Dorsolateral prefrontal cortex (tissue), 120 donors: ENCODE measurements at regions of chr2 and their contacts with region 1.

Region 1: DNA sequence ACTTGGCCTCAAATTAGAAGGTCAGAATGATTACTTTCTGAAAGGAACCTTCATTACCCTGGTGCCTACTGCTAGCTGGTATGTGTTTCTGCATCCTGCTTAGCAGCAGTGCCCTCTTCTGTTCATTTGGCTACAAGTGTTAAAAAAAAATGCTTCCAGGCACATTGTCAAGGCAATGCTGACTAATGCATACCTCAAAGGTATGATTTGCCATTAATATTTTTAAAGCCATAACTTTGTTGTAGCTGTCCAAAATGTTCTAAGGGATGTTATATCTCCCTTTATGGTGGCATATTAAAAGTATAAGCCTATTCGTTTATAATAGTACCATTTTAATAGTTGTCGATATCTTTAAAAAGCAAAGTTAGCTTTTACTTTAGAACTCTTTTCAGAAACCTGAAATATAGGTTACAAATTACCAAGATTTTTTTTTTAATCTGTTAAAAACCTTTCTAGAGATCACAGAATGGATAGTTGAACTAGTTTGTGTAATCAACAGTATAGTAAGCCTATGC is 52.0 kb upstream of the FAM171B start:
- DNase-seq: peak in 2 of 10 donors; percentile 17 to 38
- H3K4me3 ChIP-seq: no peak overlapping the region
- H3K27ac ChIP-seq: no peak overlapping the region
- H3K27me3 ChIP-seq: no peaks in the 10 kb centered on the region
- CTCF ChIP-seq: peak; percentile 45 to 91 (median 75)

Region 2: DNA sequence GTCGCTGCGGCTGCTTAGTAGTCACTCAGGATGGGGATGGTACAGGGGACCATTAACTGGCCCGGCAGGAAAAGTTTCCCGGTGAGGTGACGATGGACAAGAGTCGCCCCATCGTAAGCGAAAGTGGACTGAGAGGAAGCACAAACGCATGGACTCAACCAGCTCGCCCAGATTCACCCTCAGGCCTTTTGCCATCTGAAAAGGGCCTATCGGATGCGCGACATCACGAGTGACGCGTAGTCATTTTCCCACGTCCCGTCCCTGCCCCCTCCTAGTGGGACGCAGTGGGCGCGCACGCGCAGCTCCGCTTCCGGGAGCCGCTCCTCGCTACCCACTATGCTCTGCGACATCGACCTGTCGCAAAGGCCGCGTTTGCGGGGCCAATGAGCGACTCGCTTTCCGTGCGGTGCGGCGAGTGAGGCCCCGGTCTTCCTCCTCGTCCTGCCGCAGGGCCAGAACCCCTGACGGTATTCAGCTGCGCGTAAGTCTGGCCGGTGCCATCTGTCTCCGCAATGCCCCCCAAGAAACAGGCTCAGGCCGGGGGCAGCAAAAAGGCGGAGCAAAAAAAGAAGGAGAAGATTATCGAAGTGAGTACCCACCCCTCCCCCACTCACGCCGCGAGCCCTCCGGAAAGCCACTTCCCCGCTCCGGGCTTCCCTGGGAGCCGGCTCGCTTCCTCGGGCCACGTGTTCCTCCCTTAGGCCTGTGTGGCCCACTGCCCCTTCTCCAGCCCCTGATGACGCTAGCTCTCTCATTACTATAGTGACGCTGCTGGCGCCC is 155.8 kb before region 1 on chr2 and contains the start of gene ZC3H15:
- intact Hi-C with region 1: loop called in 1 of 2 experiments (anchors 5 kb)
- DNase-seq: peak; percentile 92 to 98 (median 94)
- H3K4me3 ChIP-seq: peak within 1 kb of the TSS; percentile 60 to 100 (median 93)
- H3K27ac ChIP-seq: peak within 1 kb of the TSS; percentile 41 to 96 (median 91)
- H3K27me3 ChIP-seq: no peaks in the 10 kb centered on the region
- CTCF ChIP-seq: peak in 29 of 56 donors; percentile 7 to 53 (median 30)
- total RNA-seq, gene ZC3H15: 41.9 to 87.7 (median 64.8) TPM

Region 3: GRCh38 chr2:186503848-186504606 is 137.8 kb before region 1 on chr2:
- intact Hi-C with region 1: loop called (anchors 1 to 2 kb)
- DNase-seq: no peak
- H3K4me3 ChIP-seq: peak overlapping the region in 1 of 59 donors; percentile 6
- H3K27ac ChIP-seq: peak overlapping the region in 12 of 59 donors; percentile 8 to 63 (median 38)
- H3K27me3 ChIP-seq: no peaks in the 10 kb centered on the region
- CTCF ChIP-seq: peak; percentile 54 to 89 (median 78)

Region 4: DNA sequence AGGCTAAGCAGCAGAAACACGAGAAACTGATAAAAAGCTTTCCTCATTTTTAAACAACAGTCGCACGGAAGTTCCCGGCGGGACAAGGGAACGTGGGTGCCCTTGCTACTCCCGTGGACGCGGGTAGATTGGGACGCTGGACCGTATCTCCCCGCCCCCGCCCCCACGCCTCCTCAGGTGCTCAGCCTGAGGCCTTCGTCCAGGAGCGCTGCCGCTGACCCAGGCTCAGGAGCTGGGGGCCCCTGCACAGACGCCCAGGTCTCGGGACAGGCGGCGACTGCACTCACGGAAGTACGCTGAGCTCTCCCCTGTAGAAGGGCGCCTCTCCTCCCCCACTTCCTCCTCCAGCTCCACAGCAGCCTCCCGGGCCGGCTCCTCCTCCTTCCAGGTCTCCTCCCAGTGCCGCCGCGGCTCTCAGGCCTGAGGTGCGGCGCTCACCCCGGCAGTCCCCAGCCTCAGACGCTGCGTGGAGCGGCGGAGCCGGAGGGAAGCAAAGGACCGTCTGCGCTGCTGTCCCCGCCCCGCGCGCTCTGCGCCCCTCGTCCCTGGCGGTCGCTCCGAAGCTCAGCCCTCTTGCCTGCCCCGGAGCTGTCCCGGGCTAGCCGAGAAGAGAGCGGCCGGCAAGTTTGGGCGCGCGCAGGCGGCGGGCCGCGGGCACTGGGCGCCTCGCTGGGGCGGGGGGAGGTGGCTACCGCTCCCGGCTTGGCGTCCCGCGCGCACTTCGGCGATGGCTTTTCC is 52.1 kb before region 1 on chr2 and contains the start of gene ITGAV:
- intact Hi-C with region 1: loop called in 1 of 2 experiments (anchors 5 kb)
- DNase-seq: peak; percentile 52 to 89 (median 76)
- H3K4me3 ChIP-seq: peak within 1 kb of the TSS; percentile 52 to 94 (median 84)
- H3K27ac ChIP-seq: peak within 1 kb of the TSS; percentile 49 to 96 (median 90)
- H3K27me3 ChIP-seq: no peaks in the 10 kb centered on the region
- CTCF ChIP-seq: peak in 7 of 56 donors; percentile 4 to 29 (median 19)
- total RNA-seq, gene ITGAV: 50.3 to 160 (median 86.2) TPM

Region 5: DNA sequence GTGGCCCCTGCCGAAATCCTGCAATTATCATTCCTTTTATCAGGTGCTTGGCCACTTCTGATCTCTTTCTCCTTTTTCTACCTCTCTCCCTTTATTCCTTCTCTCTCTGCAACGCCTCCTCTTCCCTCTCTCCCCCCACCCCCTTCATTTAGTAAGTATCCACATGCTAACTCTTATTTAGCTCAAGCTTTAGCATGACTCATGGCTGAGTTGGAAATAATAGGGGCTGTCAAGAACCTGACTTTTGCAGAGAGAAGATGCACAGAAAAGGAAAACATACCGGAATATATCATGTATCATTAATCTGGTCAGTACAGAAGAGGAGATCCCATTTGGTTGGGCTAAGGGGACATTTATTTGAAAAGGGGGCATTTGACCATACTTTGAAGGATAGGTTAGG is 85.1 kb after region 1 on chr2:
- intact Hi-C with region 1: no loop called
- DNase-seq: no peak
- H3K4me3 ChIP-seq: peak overlapping the region in 2 of 59 donors; percentile 8 to 16
- H3K27ac ChIP-seq: peak overlapping the region in 42 of 59 donors; percentile 9 to 82 (median 50)
- H3K27me3 ChIP-seq: no peaks in the 10 kb centered on the region
- CTCF ChIP-seq: no peak